ENCODE measurements at regions of chr4 and their contacts with region 1.

Region 1: GRCh38 chr4:78656968-78657445 is 105.4 kb downstream of the ANXA3 start:
- DNase-seq: no peak
- H3K4me3 Mint-ChIP-seq: peak overlapping the region; percentile 24
- H3K27ac Mint-ChIP-seq: peak overlapping the region; percentile 37
- H3K4me1 Mint-ChIP-seq: peaks cover 42% of the 10 kb centered on the region
- H3K27me3 Mint-ChIP-seq: peaks cover 12% of the 10 kb centered on the region

Region 2: GRCh38 chr4:78312989-78313753 is 343.8 kb before region 1 on chr4:
- intact Hi-C with region 1: loop called (anchors 1 kb)
- DNase-seq: no peak
- H3K4me3 Mint-ChIP-seq: no peak overlapping the region
- H3K27ac Mint-ChIP-seq: peak overlapping the region; percentile 2
- H3K4me1 Mint-ChIP-seq: peaks cover 18% of the 10 kb centered on the region
- H3K27me3 Mint-ChIP-seq: peaks cover 12% of the 10 kb centered on the region

Region 3: GRCh38 chr4:78638337-78639172 is 18.5 kb before region 1 on chr4:
- intact Hi-C with region 1: loop called (anchors 2 kb)
- DNase-seq: no peak
- H3K4me3 Mint-ChIP-seq: no peak overlapping the region
- H3K27ac Mint-ChIP-seq: peak overlapping the region; percentile 78
- H3K4me1 Mint-ChIP-seq: peaks cover 40% of the 10 kb centered on the region
- H3K27me3 Mint-ChIP-seq: peaks cover 11% of the 10 kb centered on the region

Region 4: DNA sequence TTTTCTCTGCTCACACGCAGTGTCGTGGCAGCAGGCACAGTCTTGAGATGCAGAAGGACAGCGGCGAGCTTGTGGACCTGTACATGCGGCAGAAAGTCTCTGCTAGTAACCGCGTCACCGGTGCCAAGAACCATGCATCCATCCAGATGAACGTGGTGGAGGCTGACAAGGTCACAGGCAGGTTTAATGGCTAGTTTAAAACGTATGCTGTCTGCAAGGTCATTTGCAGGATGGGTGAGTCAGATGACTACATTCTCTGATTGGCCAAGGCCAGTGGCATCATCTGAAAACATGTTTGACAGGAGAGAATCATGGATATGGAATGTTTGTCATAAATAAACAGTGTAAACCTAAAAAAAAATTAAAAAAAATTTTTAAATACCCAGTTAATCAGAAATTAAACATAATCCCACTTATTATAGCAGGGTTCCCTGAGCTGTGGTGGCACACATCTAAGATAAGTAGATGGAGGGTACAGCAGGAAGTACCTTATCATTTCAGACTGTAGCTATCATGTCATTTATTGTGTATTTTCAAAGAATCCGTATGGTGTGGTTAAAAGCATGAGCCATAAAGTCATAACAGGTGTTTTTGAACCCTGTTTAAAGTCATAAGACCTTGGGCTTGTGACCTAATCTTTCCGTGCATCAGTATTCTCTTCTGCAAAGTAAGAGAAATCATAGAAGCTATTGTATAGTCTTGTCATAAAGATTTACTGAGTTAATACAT is 111.6 kb after region 1 on chr4:
- intact Hi-C with region 1: loop called (anchors 1 kb)
- DNase-seq: no peak
- H3K4me3 Mint-ChIP-seq: no peak overlapping the region
- H3K27ac Mint-ChIP-seq: no peak overlapping the region
- H3K4me1 Mint-ChIP-seq: peaks cover 36% of the 10 kb centered on the region
- H3K27me3 Mint-ChIP-seq: no peaks in the 10 kb centered on the region

Measured in activated T-helper 2 cell treated with anti-CD3 and anti-CD28 coated beads, Interferon-gamma antibody, Interleukin-2, Interleukin-4, amounts not matched to agents 10 μg/mL and 5 μg/mL and 100 μg/mL, durations not matched to agents 14 hours and 24 hours and 36 hours (primary cell).